ENCODE measurements at regions of chr4 and their contacts with region 1.

Region 1: GRCh38 chr4:37389967-37390580 is 145.5 kb downstream of the NWD2 start:
- DNase-seq: peak; percentile 64
- H3K4me3 ChIP-seq: no peak overlapping the region
- H3K27ac ChIP-seq: no peak overlapping the region
- H3K4me1 ChIP-seq: no peaks in the 10 kb centered on the region
- H3K27me3 ChIP-seq: no peaks in the 10 kb centered on the region
- CTCF ChIP-seq: peak; percentile 77

Region 2: DNA sequence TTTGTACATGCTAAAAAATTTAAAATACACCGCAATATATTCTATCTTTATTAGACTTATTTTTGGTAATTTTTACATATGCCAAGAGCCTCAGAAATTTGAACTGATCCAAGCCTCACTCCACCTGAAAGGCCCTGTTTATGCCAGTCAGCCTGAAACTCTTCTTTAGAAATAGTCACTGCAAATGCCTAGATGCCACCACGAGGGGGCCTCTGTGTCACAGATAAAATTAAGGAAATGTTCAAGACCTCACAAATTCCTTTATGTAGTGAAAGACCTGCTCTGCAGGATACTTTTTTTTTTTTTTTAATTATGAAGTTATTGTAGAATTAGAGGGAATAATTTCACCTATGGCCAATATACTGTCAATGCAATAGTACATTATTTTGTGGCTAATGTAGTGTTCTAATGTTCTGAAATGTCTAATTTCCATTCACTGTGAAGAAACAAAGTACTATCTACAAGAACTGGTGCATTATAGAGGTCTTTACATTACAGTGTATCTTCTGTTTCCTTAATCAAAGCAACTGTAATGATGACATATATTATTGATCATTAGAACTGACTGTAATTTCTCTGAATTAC is 1038.9 kb before region 1 on chr4:
- CTCF ChIA-PET with region 1: no interaction called
- POLR2A ChIA-PET with region 1: no interaction called
- intact Hi-C with region 1: loop called (anchors 2 kb)
- DNase-seq: peak; percentile 61
- H3K4me3 ChIP-seq: no peak overlapping the region
- H3K27ac ChIP-seq: no peak overlapping the region
- H3K4me1 ChIP-seq: no peaks in the 10 kb centered on the region
- H3K27me3 ChIP-seq: no peaks in the 10 kb centered on the region
- CTCF ChIP-seq: peak; percentile 74

Region 3: GRCh38 chr4:36414248-36414647 is 975.8 kb before region 1 on chr4:
- CTCF ChIA-PET with region 1: no interaction called
- POLR2A ChIA-PET with region 1: no interaction called
- intact Hi-C with region 1: loop called (anchors 5 kb)
- DNase-seq: no peak
- H3K4me3 ChIP-seq: no peak overlapping the region
- H3K27ac ChIP-seq: no peak overlapping the region
- H3K4me1 ChIP-seq: no peaks in the 10 kb centered on the region
- H3K27me3 ChIP-seq: no peaks in the 10 kb centered on the region
- CTCF ChIP-seq: peak; percentile 25; the same call in 1 of the 2 replicates

Region 4: GRCh38 chr4:37068580-37068979 is 321.5 kb before region 1 on chr4:
- CTCF ChIA-PET with region 1: no interaction called
- POLR2A ChIA-PET with region 1: no interaction called
- intact Hi-C with region 1: loop called (anchors 10 kb)
- DNase-seq: peak; percentile 2
- H3K4me3 ChIP-seq: no peak overlapping the region
- H3K27ac ChIP-seq: no peak overlapping the region
- H3K4me1 ChIP-seq: no peaks in the 10 kb centered on the region
- H3K27me3 ChIP-seq: no peaks in the 10 kb centered on the region
- CTCF ChIP-seq: 0 out of 2 replicates have a peak, but pooled peaks have one; percentile 28

Region 5: GRCh38 chr4:37244583-37245390 is 145.3 kb before region 1 on chr4 and contains the start of gene NWD2:
- CTCF ChIA-PET with region 1: no interaction called
- POLR2A ChIA-PET with region 1: no interaction called
- intact Hi-C with region 1: loop called (anchors 10 kb)
- DNase-seq: peak; percentile 2
- H3K4me3 ChIP-seq: no peak within 1 kb of the TSS
- H3K27ac ChIP-seq: no peak within 1 kb of the TSS
- H3K4me1 ChIP-seq: no peaks in the 10 kb centered on the region
- H3K27me3 ChIP-seq: peaks cover 61% of the 10 kb centered on the region
- CTCF ChIP-seq: no peak
- total RNA-seq, gene NWD2: not detected in 2 replicates

Region 6: DNA sequence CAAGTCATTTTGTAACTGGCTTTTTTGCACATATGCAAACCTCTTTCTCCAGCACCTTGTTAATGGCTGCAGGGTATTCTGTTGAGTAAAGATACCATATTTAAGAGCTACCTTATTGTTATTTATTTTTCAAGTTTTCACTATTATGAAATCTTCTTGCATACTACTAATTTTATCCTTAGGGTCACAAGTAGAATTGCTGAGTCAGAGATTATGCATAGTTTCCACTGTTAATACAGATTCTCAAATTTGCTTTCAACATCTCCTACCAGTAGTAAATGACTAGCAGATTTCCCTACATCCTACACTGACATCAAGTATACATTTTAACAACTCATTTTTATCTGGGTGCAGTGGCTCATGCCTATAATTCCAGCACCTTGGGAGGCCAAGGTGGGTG is 183.5 kb after region 1 on chr4:
- CTCF ChIA-PET with region 1: no interaction called
- POLR2A ChIA-PET with region 1: no interaction called
- intact Hi-C with region 1: no loop called
- DNase-seq: no peak
- H3K4me3 ChIP-seq: no peak overlapping the region
- H3K27ac ChIP-seq: no peak overlapping the region
- H3K4me1 ChIP-seq: no peaks in the 10 kb centered on the region
- H3K27me3 ChIP-seq: no peaks in the 10 kb centered on the region
- CTCF ChIP-seq: no peak

Region 7: GRCh38 chr4:37603070-37603468 is 213.0 kb after region 1 on chr4:
- CTCF ChIA-PET with region 1: no interaction called
- POLR2A ChIA-PET with region 1: no interaction called
- intact Hi-C with region 1: no loop called
- DNase-seq: peak; percentile 67
- H3K4me3 ChIP-seq: no peak overlapping the region
- H3K27ac ChIP-seq: no peak overlapping the region
- H3K4me1 ChIP-seq: peaks cover 8% of the 10 kb centered on the region
- H3K27me3 ChIP-seq: no peaks in the 10 kb centered on the region
- CTCF ChIP-seq: peak; percentile 98